Heart right ventricle (tissue), 16 donors: ENCODE measurements at regions of chr18 and their contacts with region 1.

Region 1: GRCh38 chr18:7234091-7234490 is 3.2 kb downstream of the LRRC30 start:
- DNase-seq: peak; percentile 50 to 71
- ATAC-seq: peak; percentile 84 to 97 (median 94)
- H3K4me3 ChIP-seq: no peak overlapping the region
- H3K27ac ChIP-seq: peak overlapping the region in 8 of 10 donors; percentile 64 to 80 (median 75)
- H3K4me1 ChIP-seq: peaks cover 0 to 35% (median 12%) of the 10 kb centered on the region in 9 donors
- H3K27me3 ChIP-seq: peaks cover 0 to 3% (median 0%) of the 10 kb centered on the region in 7 donors
- CTCF ChIP-seq: no peak

Region 2: GRCh38 chr18:7248877-7249276 is 14.8 kb after region 1 on chr18:
- intact Hi-C with region 1: loop called in 1 of 10 experiments (anchors 2 kb)
- DNase-seq: no peak
- ATAC-seq: no peak
- H3K4me3 ChIP-seq: no peak overlapping the region
- H3K27ac ChIP-seq: peak overlapping the region in 1 of 10 donors; percentile 25
- H3K4me1 ChIP-seq: peaks cover 0 to 22% (median 0%) of the 10 kb centered on the region in 9 donors
- H3K27me3 ChIP-seq: no peaks in the 10 kb centered on the region
- CTCF ChIP-seq: no peak